Breast epithelium (tissue), 4 donors: ENCODE measurements at regions of chr13 and their contacts with region 1.

Region 1: DNA sequence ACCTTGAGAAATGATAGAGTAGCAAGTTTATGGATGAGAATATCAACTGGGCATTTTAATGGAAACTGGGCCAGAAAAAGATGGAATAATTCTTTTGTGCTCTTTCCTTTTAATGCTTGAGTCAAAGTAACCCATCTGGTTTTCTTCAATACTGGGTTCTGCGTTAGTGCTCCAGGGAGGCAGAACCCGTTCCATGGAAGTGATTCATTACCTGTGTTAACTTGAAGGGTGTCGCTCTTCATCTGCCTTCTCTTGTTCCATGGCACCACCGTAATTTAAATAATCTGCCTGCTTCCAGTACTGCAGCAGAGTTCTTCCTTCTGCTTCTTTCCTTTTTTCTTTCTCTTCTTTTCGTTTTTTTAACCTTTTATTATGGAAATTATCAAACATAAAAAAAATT is 14.7 kb upstream of the USP12 start:
- DNase-seq: no peak
- H3K4me3 ChIP-seq: no peak overlapping the region
- H3K27ac ChIP-seq: no peak overlapping the region
- H3K4me1 ChIP-seq: no peaks in the 10 kb centered on the region
- H3K27me3 ChIP-seq: no peaks in the 10 kb centered on the region
- CTCF ChIP-seq: no peak
- POLR2A ChIP-seq: no peak

Region 2: DNA sequence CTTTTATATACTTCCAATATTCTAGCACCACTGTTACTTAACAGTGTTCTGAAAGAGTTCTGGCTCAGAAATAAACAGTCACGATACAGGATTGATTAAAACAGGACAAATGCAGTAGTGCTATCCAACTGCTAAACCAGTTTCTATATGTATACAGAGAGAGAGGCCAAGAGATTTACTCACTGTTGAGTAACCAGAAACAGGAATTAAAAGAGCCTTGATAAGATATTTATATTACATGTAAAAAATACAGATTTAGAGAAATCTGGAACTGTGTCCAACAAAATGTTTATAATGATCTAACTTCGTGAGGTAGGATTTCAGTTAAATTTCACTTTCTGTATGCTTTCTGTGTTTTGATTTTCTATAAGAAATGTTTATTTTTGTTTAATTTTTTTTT is 815.7 kb before region 1 on chr13:
- intact Hi-C with region 1: no loop called
- DNase-seq: no peak
- H3K4me3 ChIP-seq: no peak overlapping the region
- H3K27ac ChIP-seq: no peak overlapping the region
- H3K4me1 ChIP-seq: no peaks in the 10 kb centered on the region
- H3K27me3 ChIP-seq: no peaks in the 10 kb centered on the region
- CTCF ChIP-seq: no peak
- POLR2A ChIP-seq: no peak

Region 3: GRCh38 chr13:27620377-27621115 is 434.3 kb after region 1 on chr13 and contains the start of gene LNX2:
- intact Hi-C with region 1: loop called (anchors 5 kb)
- DNase-seq: peak; percentile 98 to 99
- H3K4me3 ChIP-seq: peak within 1 kb of the TSS; percentile 82 to 93 (median 93)
- H3K27ac ChIP-seq: peak within 1 kb of the TSS; percentile 97 to 99
- H3K4me1 ChIP-seq: peaks cover 0 to 14% of the 10 kb centered on the region in 2 donors
- H3K27me3 ChIP-seq: no peaks in the 10 kb centered on the region
- CTCF ChIP-seq: no peak
- POLR2A ChIP-seq: peak; percentile 64
- total RNA-seq, gene LNX2: 5.9 to 19.3 (median 19.2) TPM

Region 4: DNA sequence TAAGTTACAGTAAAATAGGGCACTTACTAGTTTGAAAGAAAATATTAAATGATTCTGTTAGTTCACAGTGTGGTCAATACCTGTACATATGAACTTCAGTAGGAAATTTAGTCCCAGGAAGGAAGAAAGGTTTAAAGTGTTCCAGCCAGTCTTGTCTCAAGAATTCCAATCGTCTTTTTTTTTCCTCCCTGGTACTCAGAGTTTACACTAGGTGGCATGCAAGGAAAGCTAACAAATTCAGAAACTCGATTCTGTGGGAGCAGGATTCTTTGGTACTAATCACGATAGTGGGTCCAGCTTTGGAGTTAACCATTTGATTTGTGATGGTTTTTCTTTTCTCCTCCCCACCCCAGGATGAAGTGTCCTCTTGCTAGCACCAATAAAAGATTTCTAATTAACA is 479.0 kb after region 1 on chr13:
- intact Hi-C with region 1: no loop called
- DNase-seq: no peak
- H3K4me3 ChIP-seq: no peak overlapping the region
- H3K27ac ChIP-seq: peak overlapping the region in 1 of 2 donors; percentile 19
- H3K4me1 ChIP-seq: no peaks in the 10 kb centered on the region
- H3K27me3 ChIP-seq: no peaks in the 10 kb centered on the region
- CTCF ChIP-seq: peak in 1 of 3 donors; percentile 30
- POLR2A ChIP-seq: no peak